Right ventricle myocardium inferior (tissue), 1 donor: ENCODE measurements at regions of chr10 and their contacts with region 1.

Region 1: GRCh38 chr10:110497438-110498086 is at the start of gene DUSP5:
- DNase-seq: peak; percentile 98
- ATAC-seq: peak; percentile 92
- total RNA-seq, gene DUSP5: 6.2 TPM

Region 2: GRCh38 chr10:110210674-110211464 is 286.7 kb before region 1 on chr10:
- intact Hi-C with region 1: loop called (anchors 10 kb)
- DNase-seq: peak; percentile 97
- ATAC-seq: peak; percentile 88

Region 3: DNA sequence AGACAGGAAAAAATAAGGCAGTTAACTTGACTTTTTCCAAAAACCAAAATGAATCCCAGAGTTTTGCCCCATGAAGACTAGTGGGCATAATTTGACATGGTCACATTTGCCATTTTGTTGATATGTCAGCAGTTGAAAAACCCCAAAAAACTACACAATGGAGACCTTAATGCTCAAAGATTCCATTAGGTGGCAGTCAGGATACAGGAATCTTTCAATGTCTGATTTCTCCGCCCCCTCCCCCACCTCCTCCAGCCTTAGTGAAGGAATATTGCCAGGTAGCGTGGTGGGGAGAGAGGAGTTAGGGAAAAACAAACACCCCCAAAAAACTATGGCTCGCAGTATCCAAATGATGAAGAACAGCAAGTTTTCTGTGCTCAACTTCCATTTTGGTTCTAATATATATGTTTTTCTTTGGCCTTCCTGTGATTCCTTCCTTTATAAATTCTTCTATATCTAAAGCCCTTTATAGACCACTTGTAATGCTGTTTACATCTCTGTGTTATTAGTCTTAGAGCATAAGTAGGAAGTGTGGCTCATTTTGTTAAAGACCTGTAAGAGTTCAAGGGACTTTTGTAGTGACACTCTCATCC is 186.1 kb before region 1 on chr10:
- intact Hi-C with region 1: loop called (anchors 5 kb)
- DNase-seq: no peak
- ATAC-seq: peak; percentile 50

Region 4: DNA sequence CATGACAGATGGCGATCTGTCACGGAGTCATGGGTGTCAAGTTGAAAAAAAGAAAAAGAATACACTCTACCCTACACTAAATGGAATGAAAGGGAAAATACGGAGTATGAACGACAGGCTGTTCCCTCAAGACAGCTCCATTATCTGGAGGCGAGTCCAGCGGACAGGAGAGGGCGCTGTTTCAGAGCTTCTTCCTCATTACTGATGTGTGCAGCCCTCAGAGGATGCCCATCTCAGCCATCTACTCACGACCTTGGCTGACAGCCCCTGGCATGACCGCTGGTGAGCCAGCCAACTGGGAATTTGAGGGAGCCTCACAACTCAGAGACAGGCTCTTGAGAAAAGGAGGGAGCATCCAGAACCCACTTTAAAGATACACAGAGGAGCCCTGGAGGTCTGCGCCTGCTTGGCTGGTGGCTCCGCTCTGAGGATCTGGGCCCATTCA is 143.2 kb before region 1 on chr10:
- intact Hi-C with region 1: loop called (anchors 2 kb)
- DNase-seq: no peak
- ATAC-seq: peak; percentile 82

Region 5: DNA sequence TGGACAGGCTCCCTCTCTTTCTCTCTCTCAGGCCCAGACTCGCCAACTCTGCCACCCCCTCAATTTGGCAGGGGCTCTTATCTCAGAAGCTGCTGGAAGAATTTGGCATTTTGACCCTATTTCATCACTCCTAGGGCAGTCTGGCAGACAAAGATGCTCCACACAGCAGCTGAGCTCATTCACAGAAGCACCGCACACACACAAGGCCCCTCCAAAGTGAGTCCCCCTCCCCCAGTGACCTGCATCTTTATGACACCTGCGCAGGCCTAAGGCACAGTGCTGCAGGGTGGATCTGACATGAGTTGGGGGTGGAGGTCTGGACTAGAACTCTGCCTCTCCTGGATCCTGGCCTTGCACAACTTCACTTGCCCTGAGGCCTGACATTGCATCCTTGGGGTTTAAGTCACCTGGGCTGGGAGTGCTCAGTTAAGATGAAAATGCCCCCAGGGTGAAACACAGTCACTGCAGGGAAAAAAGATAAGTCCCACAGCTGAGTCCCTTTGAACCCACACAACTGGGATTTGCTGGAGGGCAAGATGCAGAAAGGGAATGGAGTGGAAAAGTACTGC is 41.0 kb before region 1 on chr10:
- intact Hi-C with region 1: loop called (anchors 5 kb)
- DNase-seq: no peak
- ATAC-seq: no peak

Region 6: DNA sequence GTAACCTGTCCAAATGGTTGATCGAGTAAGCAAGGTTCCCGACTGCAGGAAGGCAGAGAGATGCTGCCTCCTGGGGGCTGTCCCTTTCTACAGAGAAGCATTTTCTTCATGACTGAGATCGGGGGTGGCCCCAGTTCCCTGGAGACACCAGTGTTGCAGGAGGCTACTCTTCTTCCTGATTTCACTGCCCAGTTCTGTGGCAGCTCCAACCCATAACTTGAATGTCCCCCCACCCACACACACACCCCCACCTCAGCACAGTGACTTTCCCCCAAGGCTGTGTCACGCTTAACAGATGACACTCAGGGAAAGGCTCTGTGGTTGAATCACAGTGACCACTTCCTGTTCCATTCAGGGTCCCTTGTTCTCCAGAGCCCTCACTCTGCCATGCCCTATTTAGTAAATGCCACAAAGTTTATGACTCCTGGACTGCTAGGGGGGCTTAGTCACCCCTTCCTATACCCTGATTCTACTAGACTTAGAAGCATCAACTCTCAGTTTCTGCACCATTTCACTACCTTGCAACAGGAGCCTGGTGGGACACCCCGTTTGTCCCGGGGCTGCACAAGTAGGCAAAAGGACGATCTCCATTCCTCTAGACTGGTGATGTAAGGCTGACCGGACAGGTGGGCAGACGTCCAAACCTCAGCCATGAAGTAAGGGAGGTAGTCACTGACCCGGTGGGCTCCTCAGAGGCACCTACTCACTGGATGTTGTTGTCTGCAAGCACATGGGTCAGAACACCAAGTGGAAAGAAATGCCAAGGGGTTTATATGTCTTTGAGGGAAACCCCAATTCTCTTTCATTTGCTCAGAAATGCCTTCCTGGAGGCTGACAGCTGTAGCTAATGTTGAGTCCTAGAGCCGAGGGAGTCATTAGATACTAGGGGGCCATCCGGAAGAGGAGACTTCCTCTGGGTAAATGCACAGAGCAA is 38.7 kb after region 1 on chr10:
- intact Hi-C with region 1: loop called (anchors 5 kb)
- DNase-seq: no peak
- ATAC-seq: peak; percentile 70

Region 7: GRCh38 chr10:110567201-110568054 is 69.9 kb after region 1 on chr10 and contains the start of gene SMC3:
- intact Hi-C with region 1: loop called (anchors 5 kb)
- DNase-seq: peak; percentile 96
- ATAC-seq: peak; percentile 96
- total RNA-seq, gene SMC3: 23.3 TPM